ENCODE measurements at regions of chr21 and their contacts with region 1.

Region 1: GRCh38 chr21:14523234-14523633 is 22.9 kb downstream of the SAMSN1 start:
- DNase-seq: peak; percentile 81
- H3K4me3 Mint-ChIP-seq: peak overlapping the region; percentile 75
- H3K27ac Mint-ChIP-seq: peak overlapping the region; percentile 86
- H3K4me1 Mint-ChIP-seq: peaks cover 56% of the 10 kb centered on the region
- H3K27me3 Mint-ChIP-seq: no peaks in the 10 kb centered on the region

Region 2: DNA sequence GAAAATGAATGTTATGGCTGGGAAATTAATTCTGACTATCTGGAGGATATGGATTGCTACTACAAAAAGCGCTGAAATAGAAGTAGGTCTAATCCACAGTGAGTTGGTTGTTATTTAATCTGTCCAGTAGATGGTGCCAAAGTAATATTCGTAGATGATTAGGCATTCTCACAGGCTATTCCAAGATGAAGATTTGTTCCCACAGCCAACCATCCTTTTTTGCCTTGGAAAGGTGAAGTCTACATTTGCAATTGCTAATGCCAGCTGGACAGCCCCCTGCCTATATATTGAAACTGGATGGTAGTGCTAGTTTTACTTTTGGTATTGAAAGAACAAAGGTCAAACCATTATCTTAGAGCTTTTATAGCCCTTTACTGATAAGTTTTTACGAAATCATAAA is 263.5 kb before region 1 on chr21:
- intact Hi-C with region 1: no loop called
- DNase-seq: no peak
- H3K4me3 Mint-ChIP-seq: no peak overlapping the region
- H3K27ac Mint-ChIP-seq: no peak overlapping the region
- H3K4me1 Mint-ChIP-seq: no peaks in the 10 kb centered on the region
- H3K27me3 Mint-ChIP-seq: peaks cover 12% of the 10 kb centered on the region

Region 3: GRCh38 chr21:14454016-14455009 is 68.9 kb before region 1 on chr21:
- intact Hi-C with region 1: loop called (anchors 2 kb)
- DNase-seq: peak; percentile 61
- H3K4me3 Mint-ChIP-seq: peak overlapping the region; percentile 40
- H3K27ac Mint-ChIP-seq: peak overlapping the region; percentile 87
- H3K4me1 Mint-ChIP-seq: peaks cover 52% of the 10 kb centered on the region
- H3K27me3 Mint-ChIP-seq: no peaks in the 10 kb centered on the region

Region 4: GRCh38 chr21:14533504-14534428 is 10.5 kb after region 1 on chr21:
- intact Hi-C with region 1: loop called (anchors 1 kb)
- DNase-seq: peak; percentile 79
- H3K4me3 Mint-ChIP-seq: peak overlapping the region; percentile 85
- H3K27ac Mint-ChIP-seq: peak overlapping the region; percentile 100
- H3K4me1 Mint-ChIP-seq: peaks cover 59% of the 10 kb centered on the region
- H3K27me3 Mint-ChIP-seq: no peaks in the 10 kb centered on the region

Region 5: GRCh38 chr21:14630556-14631069 is 107.4 kb after region 1 on chr21:
- intact Hi-C with region 1: loop called (anchors 2 kb)
- DNase-seq: no peak
- H3K4me3 Mint-ChIP-seq: no peak overlapping the region
- H3K27ac Mint-ChIP-seq: peak overlapping the region; percentile 78
- H3K4me1 Mint-ChIP-seq: peaks cover 24% of the 10 kb centered on the region
- H3K27me3 Mint-ChIP-seq: no peaks in the 10 kb centered on the region

Region 6: GRCh38 chr21:14699433-14700416 is 176.5 kb after region 1 on chr21:
- intact Hi-C with region 1: no loop called
- DNase-seq: no peak
- H3K4me3 Mint-ChIP-seq: no peak overlapping the region
- H3K27ac Mint-ChIP-seq: no peak overlapping the region
- H3K4me1 Mint-ChIP-seq: peaks cover 6% of the 10 kb centered on the region
- H3K27me3 Mint-ChIP-seq: no peaks in the 10 kb centered on the region

Region 7: GRCh38 chr21:14737922-14738321 is 214.7 kb after region 1 on chr21:
- intact Hi-C with region 1: loop called (anchors 2 kb)
- DNase-seq: peak; percentile 87
- H3K4me3 Mint-ChIP-seq: no peak overlapping the region
- H3K27ac Mint-ChIP-seq: no peak overlapping the region
- H3K4me1 Mint-ChIP-seq: peaks cover 37% of the 10 kb centered on the region
- H3K27me3 Mint-ChIP-seq: no peaks in the 10 kb centered on the region

Region 8: DNA sequence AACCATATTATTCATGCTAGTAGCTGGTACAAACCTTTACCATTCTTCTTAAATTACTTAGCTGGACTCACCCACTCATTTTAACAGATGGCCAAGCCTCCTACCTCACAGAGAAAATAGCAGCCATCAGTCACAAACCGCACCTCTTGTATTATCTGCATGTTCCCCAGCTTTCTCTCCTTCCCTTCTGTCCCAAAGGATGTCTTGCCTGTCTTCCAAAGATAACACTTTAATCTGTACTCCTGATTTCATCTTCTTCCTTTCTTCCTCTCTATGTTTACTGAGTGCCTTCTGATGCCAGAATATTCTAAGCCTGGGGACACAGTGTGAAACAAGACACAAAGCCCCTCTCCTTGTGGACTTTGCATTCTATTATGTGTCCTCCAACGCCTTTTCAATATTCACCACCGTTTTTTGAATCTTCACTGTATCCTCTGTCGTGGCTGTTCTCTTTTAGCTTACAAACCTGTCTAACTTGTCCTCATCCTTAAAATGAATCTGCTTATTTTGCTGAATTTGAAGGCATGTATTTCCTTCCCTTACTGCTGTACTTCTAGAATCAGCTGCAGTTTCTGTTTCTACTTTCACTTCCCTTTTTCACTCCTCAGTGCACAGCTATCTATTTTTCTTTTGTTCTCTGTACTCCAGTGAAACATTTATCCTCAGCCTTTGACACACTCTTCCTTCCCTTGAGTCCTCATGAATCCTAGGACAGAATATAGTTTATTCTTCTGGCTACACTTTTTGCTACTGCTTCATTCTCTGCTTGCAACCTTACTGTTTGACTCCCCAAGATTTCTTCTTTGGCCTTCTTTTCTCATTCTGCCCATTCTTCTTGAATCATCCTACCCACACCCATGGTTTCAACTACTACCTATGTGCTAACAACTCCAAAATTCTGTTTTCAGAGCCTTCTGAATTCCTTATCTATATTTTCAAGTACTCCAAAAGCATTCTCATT is 239.8 kb after region 1 on chr21:
- intact Hi-C with region 1: no loop called
- DNase-seq: peak; percentile 65
- H3K4me3 Mint-ChIP-seq: no peak overlapping the region
- H3K27ac Mint-ChIP-seq: no peak overlapping the region
- H3K4me1 Mint-ChIP-seq: peaks cover 8% of the 10 kb centered on the region
- H3K27me3 Mint-ChIP-seq: no peaks in the 10 kb centered on the region